ENCODE measurements at regions of chr12 and their contacts with region 1.

Region 1: GRCh38 chr12:3947781-3948180 is 74.6 kb upstream of the PARP11 start:
- DNase-seq: peak in 7 of 9 donors; percentile 64 to 90 (median 82)
- ATAC-seq: peak; percentile 86
- H3K4me3 ChIP-seq: peak overlapping the region; percentile 2
- H3K4me3 Mint-ChIP-seq: peak overlapping the region in 9 of 10 donors; percentile 29 to 77 (median 63)
- H3K27ac ChIP-seq: peak overlapping the region; percentile 78
- H3K27ac Mint-ChIP-seq: peak overlapping the region; percentile 91 to 100 (median 98)
- H3K4me1 ChIP-seq: peaks cover 42 to 56% of the 10 kb centered on the region in 2 donors
- H3K4me1 Mint-ChIP-seq: peaks cover 45 to 78% (median 70%) of the 10 kb centered on the region in 7 donors
- H3K27me3 ChIP-seq: no peaks in the 10 kb centered on the region
- H3K27me3 Mint-ChIP-seq: peaks cover 0 to 17% (median 0%) of the 10 kb centered on the region in 5 donors

Region 2: GRCh38 chr12:3863756-3864329 is 83.9 kb before region 1 on chr12:
- CTCF ChIA-PET with region 1: no interaction called
- POLR2A ChIA-PET with region 1: no interaction called
- intact Hi-C with region 1: no loop called
- DNase-seq: no peak
- ATAC-seq: no peak
- H3K4me3 ChIP-seq: no peak overlapping the region
- H3K4me3 Mint-ChIP-seq: no peak overlapping the region
- H3K27ac ChIP-seq: no peak overlapping the region
- H3K27ac Mint-ChIP-seq: peak overlapping the region in 2 of 9 donors; percentile 9 to 74
- H3K4me1 ChIP-seq: peaks cover 0 to 4% of the 10 kb centered on the region in 2 donors
- H3K4me1 Mint-ChIP-seq: peaks cover 12 to 58% (median 39%) of the 10 kb centered on the region in 7 donors
- H3K27me3 ChIP-seq: no peaks in the 10 kb centered on the region
- H3K27me3 Mint-ChIP-seq: no peaks in the 10 kb centered on the region

Region 3: DNA sequence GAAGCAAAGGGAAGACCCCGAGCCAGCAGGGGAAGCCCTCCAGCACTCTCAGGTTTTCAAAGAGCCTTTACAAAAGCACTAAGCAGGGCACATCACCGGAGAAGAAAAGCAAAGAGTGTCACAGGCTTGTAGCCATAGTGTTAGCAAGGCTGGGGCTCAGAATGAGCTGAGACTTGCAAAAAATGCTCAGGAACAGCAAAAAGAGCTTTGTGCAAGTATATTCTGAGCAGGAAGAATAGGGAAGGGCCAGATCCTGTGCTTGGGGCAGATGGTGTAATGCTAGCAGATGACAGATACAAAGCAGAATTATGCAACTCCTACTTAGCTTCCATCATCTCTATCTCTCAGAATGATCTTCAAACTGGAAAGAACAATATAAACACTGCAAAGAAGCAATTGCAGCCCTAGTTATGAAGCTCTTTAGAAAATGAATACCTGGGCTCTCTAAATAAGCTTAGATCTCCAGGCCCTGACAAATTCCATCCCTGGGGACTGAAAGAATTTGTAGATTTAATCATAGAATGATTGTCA is 50.9 kb before region 1 on chr12:
- CTCF ChIA-PET with region 1: interaction called, 12 read pairs
- POLR2A ChIA-PET with region 1: interaction called, 33 read pairs
- intact Hi-C with region 1: loop called (anchors 1 to 2 kb)
- DNase-seq: no peak
- ATAC-seq: peak; percentile 66
- H3K4me3 ChIP-seq: peak overlapping the region; percentile 38
- H3K4me3 Mint-ChIP-seq: peak overlapping the region; percentile 68 to 89 (median 78)
- H3K27ac ChIP-seq: peak overlapping the region; percentile 71
- H3K27ac Mint-ChIP-seq: peak overlapping the region in 8 of 9 donors; percentile 94 to 98 (median 97)
- H3K4me1 ChIP-seq: peaks cover 44 to 84% of the 10 kb centered on the region in 2 donors
- H3K4me1 Mint-ChIP-seq: peaks cover 2 to 58% (median 45%) of the 10 kb centered on the region in 7 donors
- H3K27me3 ChIP-seq: no peaks in the 10 kb centered on the region
- H3K27me3 Mint-ChIP-seq: no peaks in the 10 kb centered on the region

Region 4: DNA sequence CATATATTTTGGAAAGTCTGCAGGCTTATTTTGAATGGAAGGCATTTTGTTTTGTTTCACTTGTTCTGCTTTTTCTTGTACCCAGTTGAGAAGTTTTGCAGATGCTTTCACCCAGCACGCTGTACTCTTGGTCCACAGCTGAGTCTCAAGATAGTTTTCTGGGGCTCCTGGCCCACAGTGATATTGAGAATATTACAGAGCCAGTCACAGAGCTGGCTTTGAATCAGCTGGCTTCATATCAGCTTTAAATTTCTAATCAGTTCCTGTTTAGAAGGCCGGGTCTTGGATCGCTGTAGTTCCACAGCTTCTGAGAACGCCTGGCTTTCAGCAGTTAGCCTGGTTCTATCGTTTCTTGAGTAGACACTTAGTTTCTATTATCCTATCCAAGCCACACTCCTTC is 42.1 kb before region 1 on chr12:
- CTCF ChIA-PET with region 1: interaction called, 3 read pairs
- POLR2A ChIA-PET with region 1: interaction called, 23 read pairs
- intact Hi-C with region 1: loop called in 1 of 2 experiments (anchors 1 kb)
- DNase-seq: peak in 1 of 9 donors; percentile 18
- ATAC-seq: peak; percentile 44
- H3K4me3 ChIP-seq: peak overlapping the region; percentile 52
- H3K4me3 Mint-ChIP-seq: peak overlapping the region; percentile 82 to 98 (median 91)
- H3K27ac ChIP-seq: peak overlapping the region; percentile 71
- H3K27ac Mint-ChIP-seq: peak overlapping the region; percentile 81 to 99 (median 97)
- H3K4me1 ChIP-seq: peaks cover 0 to 18% of the 10 kb centered on the region in 2 donors
- H3K4me1 Mint-ChIP-seq: peaks cover 28 to 64% (median 52%) of the 10 kb centered on the region in 7 donors
- H3K27me3 ChIP-seq: no peaks in the 10 kb centered on the region
- H3K27me3 Mint-ChIP-seq: no peaks in the 10 kb centered on the region

Region 5: DNA sequence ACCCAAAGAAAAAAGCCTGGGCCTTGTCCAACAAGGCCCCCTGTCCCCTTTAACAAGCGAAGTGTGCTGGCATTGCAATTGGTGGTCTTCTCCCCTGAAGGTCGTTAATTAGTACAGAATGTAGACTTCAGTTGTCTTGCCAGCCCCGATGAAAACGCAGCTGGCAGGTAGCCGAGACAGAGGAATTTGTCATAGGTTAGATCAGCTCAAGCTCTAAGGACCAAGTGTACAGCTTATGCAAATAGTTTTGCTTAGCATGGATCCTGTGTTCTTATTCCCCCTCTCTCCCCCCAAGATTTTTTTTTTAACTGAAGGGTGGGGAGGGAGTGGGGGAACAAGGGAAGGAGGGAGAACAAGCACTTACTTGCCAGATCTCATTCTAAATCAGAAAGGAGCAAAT is 16.0 kb before region 1 on chr12:
- CTCF ChIA-PET with region 1: interaction called, 6 read pairs
- POLR2A ChIA-PET with region 1: interaction called, 18 read pairs
- intact Hi-C with region 1: loop called (anchors 1 to 2 kb)
- DNase-seq: no peak
- ATAC-seq: no peak
- H3K4me3 ChIP-seq: no peak overlapping the region
- H3K4me3 Mint-ChIP-seq: peak overlapping the region in 3 of 10 donors; percentile 7 to 81 (median 27)
- H3K27ac ChIP-seq: no peak overlapping the region
- H3K27ac Mint-ChIP-seq: peak overlapping the region in 6 of 9 donors; percentile 51 to 89 (median 74)
- H3K4me1 ChIP-seq: peaks cover 0 to 46% of the 10 kb centered on the region in 2 donors
- H3K4me1 Mint-ChIP-seq: peaks cover 29 to 82% (median 73%) of the 10 kb centered on the region in 7 donors
- H3K27me3 ChIP-seq: no peaks in the 10 kb centered on the region
- H3K27me3 Mint-ChIP-seq: peaks cover 0 to 16% (median 0%) of the 10 kb centered on the region in 5 donors

Region 6: DNA sequence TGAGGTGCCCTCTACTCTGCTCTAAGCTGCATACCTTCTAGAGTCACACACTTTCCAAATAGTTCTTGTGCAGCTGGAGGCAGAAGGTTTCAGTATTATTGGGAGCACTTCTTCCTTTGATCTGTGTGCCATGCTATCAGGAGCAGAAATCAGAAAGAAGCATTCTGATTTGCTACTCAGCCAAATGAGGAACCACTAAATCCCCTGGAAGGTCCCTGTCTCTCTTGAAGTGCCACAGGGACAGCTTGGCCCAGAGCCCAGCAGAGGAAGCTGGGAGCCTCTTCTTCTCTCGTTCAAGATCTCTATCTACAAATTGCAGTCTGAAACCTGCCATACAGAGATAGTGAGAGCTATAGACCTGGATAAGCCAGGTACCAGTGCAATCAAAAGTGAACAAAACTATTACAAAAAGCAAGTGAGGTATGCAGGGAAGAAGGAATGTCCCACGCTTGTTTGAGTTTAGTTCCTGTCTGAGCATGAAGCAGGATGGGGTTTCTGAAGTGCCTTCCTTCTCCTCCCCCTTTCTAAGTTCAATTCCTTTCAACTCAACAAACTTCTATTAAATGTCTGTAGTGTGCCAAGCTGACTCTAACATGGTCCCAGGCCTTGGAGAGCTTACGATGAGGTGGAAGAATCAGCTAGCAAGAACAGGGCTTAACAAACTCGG is 26.3 kb after region 1 on chr12:
- CTCF ChIA-PET with region 1: interaction called, 3 read pairs
- POLR2A ChIA-PET with region 1: interaction called, 5 read pairs
- intact Hi-C with region 1: loop called in 1 of 2 experiments (anchors 1 kb)
- DNase-seq: peak in 6 of 9 donors; percentile 23 to 38 (median 32)
- ATAC-seq: peak; percentile 48
- H3K4me3 ChIP-seq: no peak overlapping the region
- H3K4me3 Mint-ChIP-seq: peak overlapping the region; percentile 49 to 84 (median 78)
- H3K27ac ChIP-seq: peak overlapping the region; percentile 60
- H3K27ac Mint-ChIP-seq: peak overlapping the region; percentile 76 to 97 (median 89)
- H3K4me1 ChIP-seq: peaks cover 26 to 66% of the 10 kb centered on the region in 2 donors
- H3K4me1 Mint-ChIP-seq: peaks cover 45 to 84% (median 76%) of the 10 kb centered on the region in 7 donors
- H3K27me3 ChIP-seq: no peaks in the 10 kb centered on the region
- H3K27me3 Mint-ChIP-seq: no peaks in the 10 kb centered on the region

Region 7: GRCh38 chr12:3988519-3989448 is 41.0 kb after region 1 on chr12:
- CTCF ChIA-PET with region 1: interaction called, 4 read pairs
- POLR2A ChIA-PET with region 1: interaction called, 15 read pairs
- intact Hi-C with region 1: loop called in 1 of 2 experiments (anchors 1 kb)
- DNase-seq: peak in 7 of 9 donors; percentile 33 to 71 (median 62)
- ATAC-seq: peak; percentile 87
- H3K4me3 ChIP-seq: peak overlapping the region; percentile 20
- H3K4me3 Mint-ChIP-seq: peak overlapping the region; percentile 62 to 75 (median 70)
- H3K27ac ChIP-seq: peak overlapping the region; percentile 61
- H3K27ac Mint-ChIP-seq: peak overlapping the region; percentile 81 to 95 (median 91)
- H3K4me1 ChIP-seq: peaks cover 9 to 21% of the 10 kb centered on the region in 2 donors
- H3K4me1 Mint-ChIP-seq: peaks cover 12 to 52% (median 37%) of the 10 kb centered on the region in 7 donors
- H3K27me3 ChIP-seq: no peaks in the 10 kb centered on the region
- H3K27me3 Mint-ChIP-seq: peaks cover 0 to 15% (median 0%) of the 10 kb centered on the region in 5 donors

Region 8: GRCh38 chr12:4256043-4256826 is 308.5 kb after region 1 on chr12:
- CTCF ChIA-PET with region 1: no interaction called
- POLR2A ChIA-PET with region 1: no interaction called
- intact Hi-C with region 1: no loop called
- DNase-seq: no peak
- ATAC-seq: no peak
- H3K4me3 ChIP-seq: no peak overlapping the region
- H3K4me3 Mint-ChIP-seq: no peak overlapping the region
- H3K27ac ChIP-seq: no peak overlapping the region
- H3K27ac Mint-ChIP-seq: peak overlapping the region in 1 of 9 donors; percentile 68
- H3K4me1 ChIP-seq: peaks cover 0 to under 1% of the 10 kb centered on the region in 2 donors
- H3K4me1 Mint-ChIP-seq: peaks cover 3 to 13% (median 3%) of the 10 kb centered on the region in 7 donors
- H3K27me3 ChIP-seq: no peaks in the 10 kb centered on the region
- H3K27me3 Mint-ChIP-seq: peaks cover 0 to 8% (median 7%) of the 10 kb centered on the region in 5 donors